ENCODE measurements at regions of chr11 and their contacts with region 1.

Region 1: GRCh38 chr11:17063171-17064002 is 14.1 kb downstream of the RPS13 start:
- DNase-seq: peak in 4 of 5 donors; percentile 45 to 64 (median 62)
- H3K4me3 ChIP-seq: no peak overlapping the region
- H3K27ac ChIP-seq: no peak overlapping the region
- H3K4me1 ChIP-seq: no peaks in the 10 kb centered on the region
- H3K27me3 ChIP-seq: no peaks in the 10 kb centered on the region
- CTCF ChIP-seq: peak; percentile 70

Region 2: DNA sequence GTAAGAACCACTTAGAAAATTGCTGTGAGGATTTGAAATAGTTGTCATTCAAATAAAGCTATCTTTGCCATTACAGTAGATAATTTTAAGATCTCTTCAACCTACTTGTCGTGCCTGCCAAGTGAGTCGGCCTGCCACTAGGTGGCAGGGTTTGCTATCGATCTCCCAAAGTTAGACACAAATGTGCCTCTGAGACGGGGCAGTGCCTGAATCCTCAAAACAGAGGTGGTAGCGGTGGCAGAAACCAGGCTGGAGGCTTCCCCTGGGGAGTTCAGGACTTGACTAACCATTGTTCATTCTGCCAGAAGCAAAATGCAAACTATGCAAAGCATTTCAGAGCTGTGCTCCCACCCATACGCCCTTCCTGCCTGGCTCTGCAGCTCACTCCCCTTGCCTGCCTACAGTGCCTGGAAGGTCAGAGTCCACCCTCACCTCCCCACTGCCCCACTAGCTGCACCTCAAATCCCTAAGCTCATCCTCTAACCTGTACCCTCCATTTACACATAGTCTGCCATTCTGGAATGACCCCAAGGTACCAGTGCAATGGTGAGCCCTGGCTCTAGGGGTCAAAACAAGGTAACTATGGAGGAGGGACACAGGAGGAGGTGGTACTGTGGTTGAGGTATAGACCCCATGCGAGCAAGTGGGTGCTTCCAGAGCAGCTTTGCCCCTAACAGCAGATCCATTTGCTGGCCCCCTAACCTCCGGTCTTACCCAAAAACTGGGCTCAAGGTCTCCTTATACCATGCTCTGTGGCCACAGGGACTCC is 242.9 kb before region 1 on chr11:
- intact Hi-C with region 1: loop called (anchors 10 kb)
- DNase-seq: peak; percentile 81 to 88 (median 84)
- H3K4me3 ChIP-seq: no peak overlapping the region
- H3K27ac ChIP-seq: no peak overlapping the region
- H3K4me1 ChIP-seq: peaks cover 0 to 12% (median 8%) of the 10 kb centered on the region in 3 donors
- H3K27me3 ChIP-seq: no peaks in the 10 kb centered on the region
- CTCF ChIP-seq: peak; percentile 81

Region 3: GRCh38 chr11:16945671-16946469 is 117.5 kb before region 1 on chr11:
- intact Hi-C with region 1: loop called (anchors 10 kb)
- DNase-seq: peak; percentile 77 to 87 (median 80)
- H3K4me3 ChIP-seq: no peak overlapping the region
- H3K27ac ChIP-seq: peak overlapping the region; percentile 20 to 67
- H3K4me1 ChIP-seq: peaks cover 0 to 14% (median 6%) of the 10 kb centered on the region in 3 donors
- H3K27me3 ChIP-seq: no peaks in the 10 kb centered on the region
- CTCF ChIP-seq: peak; percentile 75

Region 4: GRCh38 chr11:16958833-16959232 is 104.6 kb before region 1 on chr11:
- intact Hi-C with region 1: no loop called
- DNase-seq: no peak
- H3K4me3 ChIP-seq: no peak overlapping the region
- H3K27ac ChIP-seq: peak overlapping the region in 1 of 2 donors; percentile 51
- H3K4me1 ChIP-seq: peaks cover 0 to 34% (median 31%) of the 10 kb centered on the region in 3 donors
- H3K27me3 ChIP-seq: no peaks in the 10 kb centered on the region
- CTCF ChIP-seq: no peak

Measured in kidney (tissue), 22 donors.